ENCODE measurements at regions of chr7 and their contacts with region 1.

Region 1: DNA sequence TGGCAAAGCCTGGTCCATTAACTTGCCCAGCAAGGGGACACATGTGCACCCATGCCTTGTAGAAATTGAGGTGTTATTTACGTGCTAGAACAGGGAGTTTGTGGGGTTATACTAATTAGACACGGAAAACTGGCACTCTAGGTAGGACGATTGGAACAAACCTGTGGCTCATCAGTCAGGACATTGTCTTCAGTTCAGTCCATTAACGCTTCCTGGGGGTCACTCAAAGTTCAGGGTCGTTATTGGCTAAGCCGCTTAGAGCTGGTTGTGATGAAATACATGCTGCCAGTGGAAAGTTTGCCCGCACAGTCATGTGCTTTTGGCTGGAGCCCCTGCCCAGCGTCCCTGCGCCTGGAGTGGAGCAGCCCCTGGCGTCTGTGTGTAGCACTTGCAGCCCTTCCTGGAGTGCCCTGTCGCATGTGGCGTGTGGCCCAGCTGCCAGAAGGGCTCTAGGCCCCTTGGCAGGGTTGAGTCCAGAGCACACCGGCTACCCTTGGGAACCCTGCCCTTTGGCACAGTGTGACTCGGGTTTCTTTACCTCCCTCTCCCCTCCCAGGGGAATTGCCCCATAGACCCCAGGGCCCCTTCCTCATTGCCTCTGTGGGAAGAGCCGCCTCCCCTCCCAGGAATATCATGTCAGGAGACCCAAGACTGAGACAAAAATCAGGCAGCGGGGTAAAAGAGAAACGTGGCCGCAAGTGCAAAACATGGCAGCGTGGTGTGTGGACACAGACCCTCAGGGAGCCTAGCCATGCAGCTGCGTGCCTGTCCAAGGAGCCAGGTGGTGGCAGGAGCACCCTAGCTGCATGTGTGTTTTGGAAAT is 9.8 kb downstream of the ZNF775 start:
- DNase-seq: peak; percentile 98
- ATAC-seq: peak; percentile 93
- H3K4me3 ChIP-seq: no peak overlapping the region
- H3K27ac ChIP-seq: peak overlapping the region; percentile 86
- H3K4me1 ChIP-seq: peaks cover 55% of the 10 kb centered on the region
- H3K27me3 ChIP-seq: no peaks in the 10 kb centered on the region
- CTCF ChIP-seq: peak; percentile 100
- EP300 ChIP-seq: peak; percentile 94 to 95
- POLR2A ChIP-seq: peak in 1 of 2 experiments; percentile 35; a peak in 1 of 4 replicates
- RAD21 ChIP-seq: peak; percentile 100

Region 2: GRCh38 chr7:150322833-150323681 is 65.9 kb before region 1 on chr7 and contains the starts of genes ACTR3C and LRRC61:
- CTCF ChIA-PET with region 1: no interaction called
- POLR2A ChIA-PET with region 1: interaction called, 10 read pairs
- in situ Hi-C with region 1: no loop called
- intact Hi-C with region 1: loop called (anchors 1 kb)
- DNase-seq: peak; percentile 74
- ATAC-seq: peak; percentile 82
- H3K4me3 ChIP-seq: peak within 1 kb of the TSS; percentile 74 to 81 (median 77)
- H3K27ac ChIP-seq: peak within 1 kb of the TSS; percentile 84
- H3K4me1 ChIP-seq: peaks cover 54% of the 10 kb centered on the region
- H3K27me3 ChIP-seq: no peaks in the 10 kb centered on the region; a peak in 1 of 5 replicates
- CTCF ChIP-seq: peak; percentile 34; the same call in 1 of the 2 replicates
- EP300 ChIP-seq: peak in 1 of 2 experiments; percentile 35; a peak in 1 of 4 replicates
- POLR2A ChIP-seq: peak; percentile 87 to 94
- RAD21 ChIP-seq: no peak; the same call in none of the 2 replicates
- total RNA-seq, gene ACTR3C: 4.1 and 7.5 TPM in 2 replicates
- total RNA-seq, gene LRRC61: 34.8 and 38.4 TPM in 2 replicates

Region 3: DNA sequence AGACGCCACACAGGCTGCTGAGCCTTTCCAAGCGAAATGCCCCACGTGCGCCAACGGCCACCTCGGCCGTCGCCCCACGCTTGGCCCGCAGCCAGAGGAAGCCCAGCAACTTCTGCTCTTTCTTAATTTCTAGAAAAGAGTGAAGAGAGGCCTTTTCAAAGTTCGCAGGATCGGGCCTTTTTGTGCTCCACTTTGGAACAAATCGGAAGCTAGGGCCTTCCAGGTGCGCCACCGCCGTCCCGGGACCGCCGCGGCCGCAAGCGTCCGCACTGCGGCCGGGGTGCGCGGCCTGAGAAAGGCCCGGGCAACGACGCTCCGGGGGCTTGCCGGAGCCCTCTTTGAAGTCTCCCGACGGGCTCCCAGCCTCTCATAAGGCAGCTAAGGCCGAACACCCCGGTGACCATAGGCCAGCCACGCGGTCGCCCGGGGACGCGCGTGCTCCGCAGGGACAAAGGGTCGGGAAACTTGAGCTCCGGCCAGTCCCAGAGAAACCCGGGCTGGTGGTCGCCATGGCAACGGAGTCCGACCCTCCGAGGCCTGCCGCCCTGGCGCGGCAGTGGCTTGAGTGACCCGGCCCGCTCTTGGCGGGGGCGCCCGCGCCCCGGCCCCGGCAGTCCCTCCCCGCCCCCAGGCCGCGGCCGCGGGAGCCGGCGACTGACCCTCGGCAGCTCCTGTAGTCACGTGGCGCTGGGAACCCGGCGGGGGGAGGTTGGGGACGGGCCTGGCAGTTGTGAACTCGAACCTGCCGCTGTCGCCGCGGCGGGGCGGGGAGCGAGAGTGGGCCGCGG is 20.6 kb before region 1 on chr7 and contains the start of gene REPIN1:
- CTCF ChIA-PET with region 1: no interaction called
- POLR2A ChIA-PET with region 1: interaction called, 141 read pairs
- in situ Hi-C with region 1: no loop called
- intact Hi-C with region 1: loop called (anchors 1 kb)
- DNase-seq: peak; percentile 86
- ATAC-seq: peak; percentile 71
- H3K4me3 ChIP-seq: peak within 1 kb of the TSS; percentile 68 to 84 (median 82)
- H3K27ac ChIP-seq: peak within 1 kb of the TSS; percentile 100
- H3K4me1 ChIP-seq: peaks cover 35% of the 10 kb centered on the region
- H3K27me3 ChIP-seq: no peaks in the 10 kb centered on the region
- CTCF ChIP-seq: peak; percentile 26; the same call in 1 of the 2 replicates
- EP300 ChIP-seq: peak; percentile 43 to 49; a peak in 2 of 4 replicates
- POLR2A ChIP-seq: peak; percentile 50 to 72; a peak in 3 of 4 replicates
- RAD21 ChIP-seq: 0 out of 2 replicates have a peak, but pooled peaks have one; percentile 54
- total RNA-seq, gene REPIN1: 86.4 and 108 TPM in 2 replicates

Region 4: DNA sequence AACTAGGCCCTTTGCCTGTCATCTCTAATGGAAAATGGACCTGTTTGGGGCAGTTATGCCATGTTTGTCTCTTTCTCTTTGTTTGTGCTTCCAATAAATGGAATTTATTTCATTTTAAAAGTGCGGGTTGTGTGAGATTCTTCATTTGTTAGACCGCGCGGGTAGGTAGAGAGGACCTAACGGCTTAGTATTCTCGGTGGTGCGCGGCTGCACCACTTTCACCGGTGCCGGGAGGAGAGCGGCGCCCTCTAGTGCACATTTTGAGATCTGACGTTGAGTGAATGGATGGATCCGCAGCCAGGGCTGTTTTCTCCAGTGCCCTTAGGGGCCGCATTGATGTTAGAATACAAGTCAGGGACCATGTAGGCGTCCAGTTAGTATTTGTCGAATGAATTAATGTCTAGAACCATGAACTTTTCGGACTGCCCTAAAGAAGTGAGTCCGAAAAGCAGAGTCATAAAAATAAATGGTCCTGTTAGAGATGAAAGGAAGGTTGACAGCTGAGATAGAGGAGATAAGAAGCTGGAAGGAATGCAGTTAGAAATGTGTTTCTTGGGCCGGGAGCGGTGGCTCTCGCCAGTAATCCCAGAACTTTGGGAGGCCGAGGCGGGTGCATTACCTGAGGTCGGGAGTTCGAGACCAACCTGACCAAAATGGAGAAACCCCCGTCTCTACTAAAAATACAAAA is 32.2 kb after region 1 on chr7:
- CTCF ChIA-PET with region 1: interaction called, 5 read pairs
- POLR2A ChIA-PET with region 1: interaction called, 3 read pairs
- in situ Hi-C with region 1: no loop called
- intact Hi-C with region 1: loop called (anchors 1 kb)
- DNase-seq: peak; percentile 70
- ATAC-seq: peak; percentile 99
- H3K4me3 ChIP-seq: peak overlapping the region; percentile 18 to 31 (median 30); a peak in 3 of 6 replicates
- H3K27ac ChIP-seq: no peak overlapping the region
- H3K4me1 ChIP-seq: peaks cover 16% of the 10 kb centered on the region
- H3K27me3 ChIP-seq: peaks cover 0 to 5% of the 10 kb centered on the region in 2 experiments; a peak in 1 of 5 replicates
- CTCF ChIP-seq: peak; percentile 91
- EP300 ChIP-seq: no peak
- POLR2A ChIP-seq: no peak
- RAD21 ChIP-seq: peak; percentile 85

Region 5: GRCh38 chr7:150481186-150481920 is 92.4 kb after region 1 on chr7:
- CTCF ChIA-PET with region 1: no interaction called
- POLR2A ChIA-PET with region 1: no interaction called
- in situ Hi-C with region 1: no loop called
- intact Hi-C with region 1: no loop called
- DNase-seq: no peak
- ATAC-seq: no peak
- H3K4me3 ChIP-seq: no peak overlapping the region
- H3K27ac ChIP-seq: no peak overlapping the region
- H3K4me1 ChIP-seq: no peaks in the 10 kb centered on the region
- H3K27me3 ChIP-seq: peaks cover 1 to 38% of the 10 kb centered on the region in 2 experiments; a peak in 3 of 5 replicates
- CTCF ChIP-seq: no peak
- EP300 ChIP-seq: no peak
- POLR2A ChIP-seq: no peak
- RAD21 ChIP-seq: no peak

Measured in HepG2 (cell line).